ENCODE measurements at regions of chr16 and their contacts with region 1.

Region 1: DNA sequence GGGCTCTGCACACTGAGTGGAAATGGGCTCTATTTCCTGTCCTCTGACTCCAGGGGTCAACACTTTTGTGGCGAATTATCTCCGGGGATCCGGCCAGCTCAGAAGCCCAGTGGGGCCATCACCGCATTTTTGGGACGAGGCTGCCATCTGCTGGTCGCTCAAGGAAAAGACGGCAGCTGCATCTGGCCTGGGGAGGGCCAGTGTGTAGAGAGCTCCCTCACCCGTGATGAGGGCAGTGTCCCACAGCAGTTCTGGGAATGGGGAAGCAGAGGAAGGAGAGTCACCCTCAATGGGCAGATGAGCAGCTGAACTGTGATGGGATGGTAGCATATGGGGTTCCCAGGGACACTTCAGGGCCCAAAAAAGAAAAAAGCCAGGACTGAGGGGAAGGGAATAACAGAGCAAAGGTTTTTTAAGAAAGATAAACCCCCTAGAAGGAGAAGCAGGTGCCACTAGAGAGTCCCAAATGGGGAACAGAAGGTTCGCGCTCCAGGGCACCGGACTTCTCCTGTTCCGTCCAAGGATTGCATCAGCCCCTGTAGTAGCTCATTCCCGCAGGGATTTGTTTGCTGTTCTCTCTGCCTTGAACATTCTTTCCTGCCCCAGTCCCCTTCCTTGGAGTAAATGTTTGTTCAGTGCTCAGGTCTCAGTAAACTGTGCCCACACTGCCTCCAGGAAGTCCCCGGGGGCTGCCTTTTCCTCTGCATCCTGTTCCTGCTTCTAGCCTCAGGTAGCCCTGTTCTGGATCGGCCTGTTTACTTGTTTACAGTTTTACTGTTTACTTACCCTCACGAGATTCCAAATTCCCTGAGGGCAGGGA is 9.3 kb upstream of the ABCC12 start:
- DNase-seq: peak; percentile 88
- H3K4me3 ChIP-seq: peak overlapping the region in 1 of 2 experiments; percentile 12; a peak in 1 of 4 replicates
- H3K27ac ChIP-seq: no peak overlapping the region
- H3K4me1 ChIP-seq: peaks cover 0 to 4% of the 10 kb centered on the region in 2 experiments; a peak in 1 of 4 replicates
- H3K27me3 ChIP-seq: no peaks in the 10 kb centered on the region
- CTCF ChIP-seq: peak; percentile 88
- EP300 ChIP-seq: no peak
- RAD21 ChIP-seq: peak; percentile 93

Region 2: GRCh38 chr16:46937536-46937935 is 1227.6 kb before region 1 on chr16:
- CTCF ChIA-PET with region 1: interaction called, 11 read pairs
- POLR2A ChIA-PET with region 1: no interaction called
- DNase-seq: no peak
- H3K4me3 ChIP-seq: no peak overlapping the region
- H3K27ac ChIP-seq: no peak overlapping the region
- H3K4me1 ChIP-seq: no peaks in the 10 kb centered on the region
- H3K27me3 ChIP-seq: no peaks in the 10 kb centered on the region
- CTCF ChIP-seq: no peak
- EP300 ChIP-seq: no peak
- RAD21 ChIP-seq: no peak

Region 3: DNA sequence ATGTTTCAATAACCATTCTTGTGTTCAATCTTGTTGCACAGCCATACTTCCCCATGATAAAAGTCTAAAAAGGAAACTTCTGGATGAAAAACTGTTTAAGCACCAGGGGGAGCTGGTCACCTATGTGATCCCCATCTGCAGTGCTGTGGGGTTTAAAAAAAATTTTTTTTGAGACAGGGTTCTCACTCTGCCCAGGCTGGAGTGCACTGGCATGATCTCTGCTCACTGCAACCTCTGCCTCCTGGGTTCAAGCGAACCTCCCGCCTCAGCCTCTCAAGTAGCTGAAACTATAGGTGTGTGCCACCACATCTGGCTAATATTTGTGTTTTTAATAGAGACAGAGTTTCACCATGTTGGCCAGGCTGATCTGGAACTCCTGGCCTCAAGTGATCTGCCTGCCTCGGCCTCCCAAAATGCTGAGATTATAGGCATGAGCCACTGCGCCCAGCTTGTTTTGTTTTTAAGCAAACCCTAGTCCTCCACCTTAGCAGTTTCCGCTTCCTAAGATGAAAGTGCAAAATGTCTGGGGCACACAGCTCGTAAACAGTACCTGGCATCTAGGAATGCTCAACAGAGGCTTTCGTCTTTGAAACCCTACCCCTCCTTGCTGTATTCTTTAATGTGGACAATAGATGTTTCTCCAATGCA is 1217.1 kb before region 1 on chr16:
- CTCF ChIA-PET with region 1: interaction called, 39 read pairs
- POLR2A ChIA-PET with region 1: no interaction called
- DNase-seq: peak; percentile 65
- H3K4me3 ChIP-seq: no peak overlapping the region
- H3K27ac ChIP-seq: no peak overlapping the region
- H3K4me1 ChIP-seq: no peaks in the 10 kb centered on the region
- H3K27me3 ChIP-seq: no peaks in the 10 kb centered on the region
- CTCF ChIP-seq: peak; percentile 72
- EP300 ChIP-seq: no peak
- RAD21 ChIP-seq: peak; percentile 87

Region 4: GRCh38 chr16:47018223-47018891 is 1146.8 kb before region 1 on chr16:
- CTCF ChIA-PET with region 1: interaction called, 20 read pairs
- POLR2A ChIA-PET with region 1: no interaction called
- DNase-seq: peak; percentile 76
- H3K4me3 ChIP-seq: no peak overlapping the region
- H3K27ac ChIP-seq: no peak overlapping the region
- H3K4me1 ChIP-seq: no peaks in the 10 kb centered on the region
- H3K27me3 ChIP-seq: no peaks in the 10 kb centered on the region
- CTCF ChIP-seq: peak; percentile 43
- EP300 ChIP-seq: no peak
- RAD21 ChIP-seq: peak; percentile 73

Region 5: DNA sequence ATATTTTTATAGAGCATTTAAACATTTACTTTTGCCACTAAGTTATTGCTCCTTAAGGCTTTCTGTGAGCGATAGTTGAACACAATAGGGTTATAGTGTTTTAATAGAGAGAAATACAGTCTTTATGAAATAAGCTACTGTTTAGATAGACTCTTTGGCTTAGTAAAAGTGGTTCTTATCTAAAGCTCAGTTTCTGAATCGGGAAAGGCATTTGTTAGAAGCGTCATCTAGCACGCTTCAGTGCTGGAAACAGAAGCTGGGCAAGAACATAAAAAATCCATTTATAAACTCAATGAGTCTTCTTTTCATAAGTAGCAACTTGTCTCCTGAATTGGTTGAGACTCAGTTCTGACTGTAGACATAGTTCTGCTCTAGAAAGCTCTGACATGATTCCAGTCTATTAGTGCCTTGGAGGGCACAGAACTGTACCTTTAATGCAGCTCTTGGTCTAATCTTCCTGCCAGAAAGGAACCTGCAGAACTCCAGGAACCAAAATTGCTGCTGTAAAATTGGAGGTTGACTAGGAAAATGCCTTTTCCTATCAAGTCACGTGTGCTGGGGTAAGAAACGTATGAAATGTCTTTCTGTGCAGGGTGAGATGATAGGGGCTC is 1136.2 kb before region 1 on chr16:
- CTCF ChIA-PET with region 1: interaction called, 11 read pairs
- POLR2A ChIA-PET with region 1: no interaction called
- DNase-seq: no peak
- H3K4me3 ChIP-seq: no peak overlapping the region
- H3K27ac ChIP-seq: no peak overlapping the region
- H3K4me1 ChIP-seq: no peaks in the 10 kb centered on the region
- H3K27me3 ChIP-seq: no peaks in the 10 kb centered on the region
- CTCF ChIP-seq: no peak
- EP300 ChIP-seq: no peak
- RAD21 ChIP-seq: no peak

Region 6: GRCh38 chr16:48035145-48035544 is 130.0 kb before region 1 on chr16:
- CTCF ChIA-PET with region 1: no interaction called
- POLR2A ChIA-PET with region 1: no interaction called
- DNase-seq: no peak
- H3K4me3 ChIP-seq: no peak overlapping the region
- H3K27ac ChIP-seq: no peak overlapping the region
- H3K4me1 ChIP-seq: no peaks in the 10 kb centered on the region
- H3K27me3 ChIP-seq: no peaks in the 10 kb centered on the region
- CTCF ChIP-seq: no peak
- EP300 ChIP-seq: no peak
- RAD21 ChIP-seq: no peak

Region 7: DNA sequence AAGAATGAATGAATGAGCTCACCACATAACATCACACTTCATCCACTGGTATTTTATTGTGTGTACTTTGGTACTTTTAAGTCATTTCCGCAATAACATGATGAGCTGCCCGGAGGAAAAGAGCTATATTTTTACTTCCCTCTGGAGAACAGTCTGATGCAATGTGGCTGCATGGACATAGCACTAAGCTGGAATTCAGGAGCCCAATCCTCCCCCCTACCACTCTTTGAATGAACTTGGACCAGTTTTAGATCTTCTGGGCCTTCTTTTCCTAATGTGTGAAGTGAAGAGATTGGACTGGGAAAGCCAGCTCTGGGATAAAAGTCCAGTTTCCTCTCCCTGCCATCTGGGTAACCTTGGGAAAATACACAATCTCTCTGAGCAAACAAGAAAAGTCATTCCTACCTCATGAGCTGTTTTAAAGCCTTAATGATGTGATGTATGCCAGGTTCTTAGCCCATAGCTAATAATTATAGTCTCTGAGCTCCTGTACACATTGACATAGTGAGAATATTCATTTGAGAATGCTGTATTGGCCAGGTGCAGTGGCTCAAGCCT is 88.6 kb before region 1 on chr16:
- CTCF ChIA-PET with region 1: no interaction called
- POLR2A ChIA-PET with region 1: no interaction called
- DNase-seq: no peak
- H3K4me3 ChIP-seq: no peak overlapping the region
- H3K27ac ChIP-seq: peak overlapping the region in 1 of 2 experiments; percentile 63; a peak in 2 of 4 replicates
- H3K4me1 ChIP-seq: peaks cover 0 to 22% of the 10 kb centered on the region in 2 experiments; a peak in 2 of 4 replicates
- H3K27me3 ChIP-seq: no peaks in the 10 kb centered on the region
- CTCF ChIP-seq: no peak
- EP300 ChIP-seq: no peak
- RAD21 ChIP-seq: no peak

Region 8: GRCh38 chr16:48126801-48127644 is 38.1 kb before region 1 on chr16:
- CTCF ChIA-PET with region 1: no interaction called
- POLR2A ChIA-PET with region 1: no interaction called
- DNase-seq: no peak
- H3K4me3 ChIP-seq: no peak overlapping the region
- H3K27ac ChIP-seq: peak overlapping the region; percentile 62 to 98; a peak in 3 of 4 replicates
- H3K4me1 ChIP-seq: peaks cover 0 to 27% of the 10 kb centered on the region in 2 experiments; a peak in 3 of 4 replicates
- H3K27me3 ChIP-seq: no peaks in the 10 kb centered on the region
- CTCF ChIP-seq: no peak
- EP300 ChIP-seq: peak; percentile 66 to 96; a peak in 3 of 4 replicates
- RAD21 ChIP-seq: no peak

Region 9: GRCh38 chr16:48244863-48245195 is 79.7 kb after region 1 on chr16:
- CTCF ChIA-PET with region 1: no interaction called
- POLR2A ChIA-PET with region 1: no interaction called
- DNase-seq: no peak
- H3K4me3 ChIP-seq: peak overlapping the region; percentile 75 to 91
- H3K27ac ChIP-seq: peak overlapping the region; percentile 70 to 72; a peak in 3 of 4 replicates
- H3K4me1 ChIP-seq: peaks cover 6 to 10% of the 10 kb centered on the region in 2 experiments; a peak in 3 of 4 replicates
- H3K27me3 ChIP-seq: no peaks in the 10 kb centered on the region
- CTCF ChIP-seq: no peak
- EP300 ChIP-seq: no peak
- RAD21 ChIP-seq: no peak